ENCODE measurements at regions of chr6 and their contacts with region 1.

Region 1: GRCh38 chr6:16183187-16183664 is 54.3 kb downstream of the MYLIP start:
- DNase-seq: peak; percentile 10
- H3K4me3 ChIP-seq: no peak overlapping the region
- H3K27ac ChIP-seq: no peak overlapping the region
- H3K27me3 ChIP-seq: peaks cover 11% of the 10 kb centered on the region
- CTCF ChIP-seq: peak; percentile 70

Region 2: DNA sequence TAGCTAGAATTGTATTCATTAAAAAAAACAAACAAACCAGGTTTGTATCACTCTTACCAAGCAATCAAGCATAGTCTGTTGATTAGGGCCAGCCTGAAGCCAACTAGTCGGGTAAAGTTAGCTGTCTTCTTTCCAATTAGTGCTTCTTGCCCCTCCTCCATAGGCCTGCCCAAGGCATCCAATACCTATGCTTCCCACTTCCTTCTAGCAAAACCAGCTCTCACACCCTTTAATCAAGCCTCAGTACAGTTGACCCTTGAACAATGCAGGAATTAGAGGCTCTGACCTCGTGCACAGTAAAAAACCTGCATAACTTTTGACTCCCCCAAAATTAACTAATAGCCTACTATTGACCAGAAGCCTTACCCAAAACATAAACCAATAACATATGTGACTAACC is 401.3 kb before region 1 on chr6:
- CTCF ChIA-PET with region 1: interaction called, 11 read pairs
- POLR2A ChIA-PET with region 1: no interaction called
- DNase-seq: no peak
- H3K4me3 ChIP-seq: no peak overlapping the region
- H3K27ac ChIP-seq: no peak overlapping the region
- H3K27me3 ChIP-seq: no peaks in the 10 kb centered on the region
- CTCF ChIP-seq: no peak

Region 3: GRCh38 chr6:16064671-16065072 is 118.6 kb before region 1 on chr6:
- CTCF ChIA-PET with region 1: no interaction called
- POLR2A ChIA-PET with region 1: no interaction called
- DNase-seq: no peak
- H3K4me3 ChIP-seq: no peak overlapping the region
- H3K27ac ChIP-seq: no peak overlapping the region
- H3K27me3 ChIP-seq: peaks cover 4% of the 10 kb centered on the region
- CTCF ChIP-seq: no peak

Region 4: DNA sequence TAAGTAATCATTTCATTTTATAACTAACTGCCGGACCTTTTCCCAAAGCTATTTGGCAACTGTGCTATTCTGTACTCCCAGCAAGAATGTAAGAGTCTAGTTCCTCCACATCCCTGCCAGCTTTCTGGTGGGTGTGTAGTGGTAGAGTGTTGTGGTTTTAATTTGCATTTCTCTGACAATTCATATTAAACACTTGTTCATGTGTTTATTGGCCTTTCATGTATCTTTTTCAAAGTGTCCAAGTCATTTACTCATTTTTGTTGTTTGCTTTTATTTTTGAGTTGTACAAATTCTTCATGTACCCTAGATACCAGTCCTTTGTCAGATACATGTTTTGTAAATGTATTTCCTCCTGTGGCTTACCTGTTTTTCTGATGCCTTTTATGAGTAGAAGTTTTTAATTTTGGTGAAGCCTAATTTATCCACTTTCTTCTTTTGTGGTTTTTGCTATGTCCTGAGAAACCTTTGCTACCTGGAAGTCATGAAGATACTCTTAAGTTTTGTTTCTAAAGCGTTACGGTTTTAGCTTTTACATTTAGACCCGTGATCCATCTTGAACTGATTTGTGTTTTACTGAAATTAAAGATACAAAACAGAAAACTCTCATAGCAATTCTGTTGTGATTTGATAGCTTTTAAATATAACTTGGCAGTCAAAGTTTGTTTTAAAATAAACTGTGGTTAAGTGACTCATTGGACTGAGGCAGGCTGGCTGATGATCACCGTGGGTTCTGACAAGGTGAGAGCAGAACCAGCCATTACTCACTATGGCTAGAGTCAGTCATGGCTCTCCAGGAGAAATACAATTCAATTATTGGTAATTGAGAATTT is 46.4 kb before region 1 on chr6:
- CTCF ChIA-PET with region 1: interaction called, 18 read pairs
- POLR2A ChIA-PET with region 1: no interaction called
- DNase-seq: peak; percentile 60
- H3K4me3 ChIP-seq: no peak overlapping the region
- H3K27ac ChIP-seq: no peak overlapping the region
- H3K27me3 ChIP-seq: no peaks in the 10 kb centered on the region
- CTCF ChIP-seq: no peak

Region 5: GRCh38 chr6:16200321-16200883 is 17.2 kb after region 1 on chr6:
- CTCF ChIA-PET with region 1: interaction called, 30 read pairs
- POLR2A ChIA-PET with region 1: no interaction called
- DNase-seq: no peak
- H3K4me3 ChIP-seq: no peak overlapping the region
- H3K27ac ChIP-seq: no peak overlapping the region
- H3K27me3 ChIP-seq: peaks cover 11% of the 10 kb centered on the region
- CTCF ChIP-seq: no peak